ENCODE measurements at regions of chr11 and their contacts with region 1.

Region 1: DNA sequence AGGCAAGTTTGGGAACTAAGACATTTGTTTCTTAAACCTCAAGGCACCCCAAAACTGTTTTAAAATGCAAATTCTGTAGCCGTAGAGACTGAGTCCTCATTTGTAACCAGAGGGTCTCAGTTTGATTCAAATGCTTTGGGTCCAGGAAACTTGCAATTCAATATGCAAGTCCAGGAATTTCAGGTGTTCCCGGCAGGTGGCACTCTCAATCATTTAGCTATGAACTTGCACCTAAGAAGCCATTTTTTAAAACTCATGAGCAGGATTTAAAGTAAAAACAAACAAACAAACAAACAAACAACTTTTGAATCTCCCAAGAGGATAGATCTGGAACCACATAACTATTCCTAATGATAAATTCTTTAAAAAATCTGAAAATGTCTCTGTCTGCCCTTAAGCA is 8.7 kb upstream of the ABTB2 start:
- DNase-seq: no peak
- H3K4me3 ChIP-seq: no peak overlapping the region
- H3K27ac ChIP-seq: no peak overlapping the region
- H3K4me1 ChIP-seq: no peaks in the 10 kb centered on the region
- H3K27me3 ChIP-seq: no peaks in the 10 kb centered on the region
- CTCF ChIP-seq: peak in 2 of 3 experiments; percentile 11 to 23; a peak in 2 of 4 replicates
- EP300 ChIP-seq: no peak
- POLR2A ChIP-seq: no peak
- RAD21 ChIP-seq: peak; percentile 7 to 32; a peak in 2 of 4 replicates

Region 2: DNA sequence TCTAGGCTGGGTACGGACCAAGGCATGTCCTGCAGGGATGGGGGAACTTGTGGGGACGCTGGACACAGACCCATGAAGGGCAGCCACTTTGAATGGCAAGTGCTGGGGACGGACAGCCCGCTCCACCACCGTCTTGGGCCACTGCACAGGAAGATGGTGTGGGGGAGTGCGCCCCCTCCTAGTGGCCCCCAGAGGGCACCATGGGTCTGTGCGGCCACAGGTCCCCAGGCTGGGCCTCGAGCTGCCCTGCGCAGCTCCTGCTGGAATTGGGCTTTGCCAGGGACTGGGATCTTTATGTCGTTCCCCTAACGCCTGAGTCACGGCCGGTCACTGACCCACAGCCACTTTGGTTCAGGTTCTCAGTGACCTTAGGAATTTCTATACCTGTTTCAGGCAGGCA is 216.7 kb before region 1 on chr11:
- CTCF ChIA-PET with region 1: interaction called, 42 read pairs
- POLR2A ChIA-PET with region 1: interaction called, 3 read pairs
- DNase-seq: peak in 1 of 2 experiments; percentile 59
- H3K4me3 ChIP-seq: no peak overlapping the region
- H3K27ac ChIP-seq: no peak overlapping the region
- H3K4me1 ChIP-seq: no peaks in the 10 kb centered on the region
- H3K27me3 ChIP-seq: no peaks in the 10 kb centered on the region
- CTCF ChIP-seq: peak; percentile 61 to 70 (median 65)
- EP300 ChIP-seq: no peak
- POLR2A ChIP-seq: no peak
- RAD21 ChIP-seq: peak; percentile 67 to 77

Region 3: DNA sequence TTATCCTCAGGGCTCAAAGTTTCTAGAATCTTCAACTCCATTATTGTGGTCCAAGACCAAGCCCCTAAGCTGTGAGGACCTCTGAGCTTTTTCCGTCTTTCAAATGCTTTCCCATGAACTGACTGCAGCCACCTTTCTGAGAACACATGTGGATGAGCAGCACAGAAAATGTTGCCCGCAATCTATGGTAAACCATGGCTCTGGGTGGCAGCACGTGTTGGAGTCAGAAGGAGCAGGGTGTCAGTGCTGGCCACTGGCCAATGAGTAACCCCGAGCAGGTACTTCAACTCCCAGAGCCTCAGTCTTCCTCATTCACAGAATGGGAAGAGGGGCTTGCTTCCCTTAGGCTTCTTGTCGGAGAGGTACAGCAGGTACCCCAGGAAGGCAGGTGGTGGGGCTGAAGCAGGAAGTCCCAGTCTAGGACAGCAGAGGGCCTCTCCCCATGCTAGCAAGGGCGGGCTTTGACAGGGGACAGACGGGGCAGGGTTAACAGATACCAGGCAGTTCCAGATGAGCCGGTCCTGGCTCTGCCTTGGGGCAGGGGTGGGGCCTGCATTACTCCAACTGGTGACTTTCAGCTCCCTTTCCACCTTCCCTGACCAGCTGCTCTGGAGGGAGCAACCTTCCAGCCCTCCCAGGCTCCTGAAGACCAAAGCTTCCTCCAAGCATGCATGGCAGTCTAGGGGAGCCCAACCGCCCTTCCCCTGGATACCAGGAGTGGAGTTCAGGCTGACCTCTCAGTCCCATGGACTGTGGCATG is 200.8 kb before region 1 on chr11:
- CTCF ChIA-PET with region 1: interaction called, 17 read pairs
- POLR2A ChIA-PET with region 1: interaction called, 3 read pairs
- DNase-seq: no peak
- H3K4me3 ChIP-seq: no peak overlapping the region
- H3K27ac ChIP-seq: no peak overlapping the region
- H3K4me1 ChIP-seq: no peaks in the 10 kb centered on the region
- H3K27me3 ChIP-seq: no peaks in the 10 kb centered on the region
- CTCF ChIP-seq: peak in 2 of 3 experiments; percentile 37 to 40; a peak in 3 of 4 replicates
- EP300 ChIP-seq: no peak
- POLR2A ChIP-seq: no peak
- RAD21 ChIP-seq: peak; percentile 29 to 45; a peak in 2 of 4 replicates

Region 4: DNA sequence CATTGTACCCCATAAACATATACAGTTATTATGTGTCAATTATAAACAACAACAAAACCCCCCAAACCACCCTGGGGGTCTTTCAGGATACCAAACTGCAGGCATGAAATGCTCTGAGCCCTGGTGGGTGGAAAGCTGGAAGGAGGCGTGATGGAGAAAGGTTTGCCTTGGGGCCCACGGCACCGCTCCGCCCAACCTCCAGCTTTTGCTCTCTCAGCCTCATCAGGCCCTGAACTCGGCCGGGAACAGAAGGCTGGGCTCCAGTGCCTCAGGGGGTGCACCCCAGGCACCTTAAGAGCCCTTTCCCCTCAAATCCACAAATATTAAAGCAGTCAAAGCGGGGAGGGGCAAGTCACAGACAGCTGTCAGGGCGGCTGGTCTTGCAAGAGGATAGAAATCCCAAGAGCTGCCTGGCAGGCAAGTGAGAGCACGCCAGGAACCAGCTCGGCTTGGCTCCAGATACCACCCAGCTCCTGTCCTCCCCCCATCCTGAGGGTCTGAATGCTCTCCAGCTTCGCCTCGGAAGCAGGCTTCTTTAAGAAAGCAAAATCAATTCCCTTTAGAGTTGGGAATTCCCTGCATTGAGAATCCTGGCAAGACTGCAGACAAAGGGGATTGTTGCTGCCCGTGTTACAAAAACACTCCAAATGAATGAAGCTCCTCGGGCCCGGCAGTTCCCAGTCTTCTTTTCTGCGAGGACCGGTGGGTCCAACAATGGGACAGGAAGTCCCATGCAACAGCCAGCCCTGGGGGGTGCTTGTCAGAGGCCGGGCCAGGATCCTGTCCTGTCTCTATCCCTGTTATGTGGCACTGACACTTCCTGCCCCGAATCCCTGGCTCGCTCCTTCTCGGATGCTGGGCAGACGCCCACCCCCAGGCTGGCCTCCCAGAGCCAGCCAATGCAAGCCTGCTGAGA is 180.3 kb before region 1 on chr11:
- CTCF ChIA-PET with region 1: interaction called, 10 read pairs
- POLR2A ChIA-PET with region 1: no interaction called
- DNase-seq: peak in 1 of 2 experiments; percentile 64
- H3K4me3 ChIP-seq: peak overlapping the region in 2 of 4 experiments; percentile 7 to 13; a peak in 3 of 8 replicates
- H3K27ac ChIP-seq: peak overlapping the region; percentile 20; the same call in 1 of the 2 replicates
- H3K4me1 ChIP-seq: peaks cover 17 to 32% (median 21%) of the 10 kb centered on the region in 4 experiments
- H3K27me3 ChIP-seq: no peaks in the 10 kb centered on the region
- CTCF ChIP-seq: no peak
- EP300 ChIP-seq: no peak
- POLR2A ChIP-seq: no peak
- RAD21 ChIP-seq: no peak

Region 5: DNA sequence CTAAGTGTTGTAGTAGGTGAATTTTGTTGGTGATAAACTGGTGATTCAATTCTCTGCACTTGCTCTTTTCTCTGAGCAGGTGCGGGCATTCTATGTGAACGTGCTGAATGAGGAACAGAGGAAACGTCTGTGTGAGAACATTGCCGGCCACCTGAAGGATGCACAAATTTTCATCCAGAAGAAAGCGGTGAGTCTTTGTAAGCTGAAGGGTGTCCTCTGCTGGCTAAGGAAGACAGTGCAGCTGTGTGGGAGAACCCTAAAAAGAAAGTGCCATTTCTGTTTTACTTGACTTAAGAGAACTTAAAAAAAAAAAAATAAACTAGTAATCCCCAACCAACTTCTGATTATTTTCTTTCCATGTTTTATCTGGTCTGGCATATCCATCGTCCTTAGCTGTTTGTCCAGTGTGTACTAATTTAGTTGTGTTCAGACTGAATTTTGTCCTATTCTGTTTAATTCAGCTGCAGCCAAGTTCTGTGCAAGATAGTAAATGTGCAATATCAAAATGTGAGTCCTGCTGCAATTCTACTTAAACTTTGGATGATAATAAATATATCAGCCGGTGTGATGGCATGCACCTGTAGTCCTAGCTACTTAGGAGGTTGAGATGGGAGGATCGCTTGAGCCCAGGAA is 101.8 kb after region 1 on chr11:
- CTCF ChIA-PET with region 1: interaction called, 10 read pairs
- POLR2A ChIA-PET with region 1: no interaction called
- DNase-seq: peak; percentile 7 to 57
- H3K4me3 ChIP-seq: no peak overlapping the region
- H3K27ac ChIP-seq: no peak overlapping the region
- H3K4me1 ChIP-seq: no peaks in the 10 kb centered on the region
- H3K27me3 ChIP-seq: no peaks in the 10 kb centered on the region
- CTCF ChIP-seq: peak; percentile 2 to 74 (median 68)
- EP300 ChIP-seq: no peak
- POLR2A ChIP-seq: no peak
- RAD21 ChIP-seq: peak; percentile 77 to 79

Region 6: GRCh38 chr11:34492806-34493414 is 126.4 kb after region 1 on chr11:
- CTCF ChIA-PET with region 1: interaction called, 18 read pairs
- POLR2A ChIA-PET with region 1: no interaction called
- DNase-seq: peak; percentile 7 to 65
- H3K4me3 ChIP-seq: no peak overlapping the region
- H3K27ac ChIP-seq: no peak overlapping the region
- H3K4me1 ChIP-seq: no peaks in the 10 kb centered on the region
- H3K27me3 ChIP-seq: no peaks in the 10 kb centered on the region
- CTCF ChIP-seq: peak in 2 of 3 experiments; percentile 52 to 67; a peak in 3 of 4 replicates
- EP300 ChIP-seq: no peak
- POLR2A ChIP-seq: no peak
- RAD21 ChIP-seq: peak; percentile 67 to 74